Ascending aorta (tissue), 2 donors: ENCODE measurements at regions of chr12 and their contacts with region 1.

Region 1: DNA sequence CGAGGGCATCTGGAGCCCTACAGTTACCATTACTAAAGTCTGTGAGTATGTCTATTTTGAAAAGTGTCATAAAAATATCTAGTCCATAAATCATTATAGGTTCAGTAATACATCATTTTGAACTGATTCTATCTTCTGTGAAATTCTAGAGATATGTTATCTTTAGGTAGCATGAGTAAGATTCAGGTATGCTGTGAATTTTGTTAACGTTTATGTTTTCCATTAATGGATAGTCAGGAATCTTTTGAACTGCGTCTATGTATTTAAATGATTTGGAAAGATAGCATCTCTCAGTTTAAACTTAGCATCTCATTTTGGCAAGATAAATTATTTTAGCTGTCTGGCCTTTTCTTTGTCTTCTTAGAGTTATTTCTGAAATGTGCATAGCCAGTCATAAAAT is 8.3 kb downstream of the ALG10B start:
- DNase-seq: no peak
- H3K4me3 ChIP-seq: no peak overlapping the region
- H3K27ac ChIP-seq: no peak overlapping the region
- H3K4me1 ChIP-seq: no peaks in the 10 kb centered on the region
- H3K27me3 ChIP-seq: no peaks in the 10 kb centered on the region
- CTCF ChIP-seq: no peak

Region 2: GRCh38 chr12:38132139-38132538 is 192.8 kb before region 1 on chr12:
- intact Hi-C with region 1: no loop called
- DNase-seq: no peak
- H3K4me3 ChIP-seq: no peak overlapping the region
- H3K27ac ChIP-seq: no peak overlapping the region
- H3K4me1 ChIP-seq: no peaks in the 10 kb centered on the region
- H3K27me3 ChIP-seq: no peaks in the 10 kb centered on the region
- CTCF ChIP-seq: no peak

Region 3: GRCh38 chr12:39103552-39104165 is 778.8 kb after region 1 on chr12:
- intact Hi-C with region 1: loop called (anchors 10 kb)
- DNase-seq: no peak
- H3K4me3 ChIP-seq: no peak overlapping the region
- H3K27ac ChIP-seq: no peak overlapping the region
- H3K4me1 ChIP-seq: no peaks in the 10 kb centered on the region
- H3K27me3 ChIP-seq: no peaks in the 10 kb centered on the region
- CTCF ChIP-seq: peak; percentile 17 to 72 (median 64)

Region 4: DNA sequence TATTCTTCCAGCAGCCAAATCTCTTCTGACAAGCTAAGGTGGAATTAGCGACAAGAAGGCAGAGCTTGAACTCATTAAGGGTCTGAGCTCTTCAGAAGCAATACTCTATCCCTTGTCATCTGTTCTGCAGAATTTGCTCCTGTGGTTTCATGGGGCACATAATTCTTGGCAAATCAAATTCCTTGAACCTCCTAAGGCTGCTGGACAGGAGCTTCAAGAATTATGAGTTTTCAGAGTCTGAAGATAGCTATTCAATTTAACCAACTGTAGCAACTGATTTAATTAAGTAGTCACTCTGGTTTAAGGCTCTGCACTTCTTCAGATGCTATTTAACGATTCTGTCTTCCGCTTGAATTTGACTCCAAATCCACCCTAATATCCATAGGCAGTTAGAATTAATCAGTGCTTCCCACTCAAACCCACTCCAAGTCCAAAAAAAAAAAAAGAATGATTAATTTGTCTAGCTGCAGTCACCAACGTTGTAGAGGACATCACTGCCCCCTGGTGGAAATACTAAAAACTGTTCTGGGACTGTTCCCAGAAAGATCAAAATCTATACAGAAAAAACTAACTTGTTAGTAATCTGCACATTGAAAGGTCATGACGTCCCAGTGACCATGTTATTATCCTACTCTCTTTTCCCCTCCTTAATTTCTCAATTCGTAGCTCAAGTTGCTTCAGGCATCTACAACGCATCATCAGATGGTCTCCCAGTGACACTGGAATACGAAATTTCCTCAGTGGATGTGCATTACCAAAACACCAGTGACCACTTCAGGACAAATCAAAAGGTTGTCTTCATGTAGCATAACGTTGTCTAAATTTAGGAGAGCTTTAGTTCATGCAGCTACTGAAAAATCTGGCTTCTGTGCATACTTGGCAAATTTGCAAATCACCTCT is 948.2 kb after region 1 on chr12:
- intact Hi-C with region 1: loop called (anchors 5 kb)
- DNase-seq: no peak
- H3K4me3 ChIP-seq: no peak overlapping the region
- H3K27ac ChIP-seq: no peak overlapping the region
- H3K4me1 ChIP-seq: no peaks in the 10 kb centered on the region
- H3K27me3 ChIP-seq: no peaks in the 10 kb centered on the region
- CTCF ChIP-seq: peak in 2 of 3 experiments; percentile 45 to 58